ENCODE measurements at regions of chr7 and their contacts with region 1.

Region 1: DNA sequence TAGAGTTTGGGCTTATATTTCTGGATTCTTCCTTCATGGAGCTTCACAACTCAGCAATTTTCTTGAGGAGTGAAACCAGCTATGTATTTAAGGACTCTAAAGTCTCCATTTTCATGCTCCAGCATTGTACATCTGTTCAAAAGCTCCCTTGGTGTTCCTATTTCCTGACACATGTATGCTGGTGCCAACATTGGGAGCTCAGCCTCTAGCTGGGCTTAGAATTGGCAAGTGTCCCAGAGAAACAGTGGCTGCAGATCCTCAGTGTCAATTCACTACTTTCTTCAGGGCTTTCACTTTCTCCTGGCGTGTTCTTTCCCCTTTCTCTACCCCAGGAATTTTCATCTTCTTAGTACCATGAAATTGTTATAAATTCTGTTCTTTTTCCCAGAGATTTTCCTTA is 103.1 kb downstream of the ZNF467 start:
- DNase-seq: no peak
- ATAC-seq: peak; percentile 52 to 68 (median 60)
- H3K4me3 ChIP-seq: no peak overlapping the region
- H3K27ac ChIP-seq: no peak overlapping the region
- H3K4me1 ChIP-seq: no peaks in the 10 kb centered on the region
- H3K27me3 ChIP-seq: no peaks in the 10 kb centered on the region
- CTCF ChIP-seq: no peak
- POLR2A ChIP-seq: no peak

Region 2: GRCh38 chr7:149729983-149730801 is 59.9 kb after region 1 on chr7:
- intact Hi-C with region 1: loop called (anchors 5 to 10 kb)
- DNase-seq: no peak
- ATAC-seq: no peak
- H3K4me3 ChIP-seq: no peak overlapping the region
- H3K27ac ChIP-seq: no peak overlapping the region
- H3K4me1 ChIP-seq: no peaks in the 10 kb centered on the region
- H3K27me3 ChIP-seq: no peaks in the 10 kb centered on the region
- CTCF ChIP-seq: no peak
- POLR2A ChIP-seq: no peak

Region 3: GRCh38 chr7:149736478-149737360 is 66.4 kb after region 1 on chr7:
- intact Hi-C with region 1: loop called (anchors 5 to 10 kb)
- DNase-seq: no peak
- ATAC-seq: no peak
- H3K4me3 ChIP-seq: no peak overlapping the region
- H3K27ac ChIP-seq: no peak overlapping the region
- H3K4me1 ChIP-seq: peaks cover 0 to under 1% (median 0%) of the 10 kb centered on the region in 4 donors
- H3K27me3 ChIP-seq: no peaks in the 10 kb centered on the region
- CTCF ChIP-seq: no peak
- POLR2A ChIP-seq: no peak

Measured in right lobe of liver (tissue), 6 donors.